Dorsolateral prefrontal cortex (tissue), 120 donors: ENCODE measurements at regions of chr1 and their contacts with region 1.

Region 1: DNA sequence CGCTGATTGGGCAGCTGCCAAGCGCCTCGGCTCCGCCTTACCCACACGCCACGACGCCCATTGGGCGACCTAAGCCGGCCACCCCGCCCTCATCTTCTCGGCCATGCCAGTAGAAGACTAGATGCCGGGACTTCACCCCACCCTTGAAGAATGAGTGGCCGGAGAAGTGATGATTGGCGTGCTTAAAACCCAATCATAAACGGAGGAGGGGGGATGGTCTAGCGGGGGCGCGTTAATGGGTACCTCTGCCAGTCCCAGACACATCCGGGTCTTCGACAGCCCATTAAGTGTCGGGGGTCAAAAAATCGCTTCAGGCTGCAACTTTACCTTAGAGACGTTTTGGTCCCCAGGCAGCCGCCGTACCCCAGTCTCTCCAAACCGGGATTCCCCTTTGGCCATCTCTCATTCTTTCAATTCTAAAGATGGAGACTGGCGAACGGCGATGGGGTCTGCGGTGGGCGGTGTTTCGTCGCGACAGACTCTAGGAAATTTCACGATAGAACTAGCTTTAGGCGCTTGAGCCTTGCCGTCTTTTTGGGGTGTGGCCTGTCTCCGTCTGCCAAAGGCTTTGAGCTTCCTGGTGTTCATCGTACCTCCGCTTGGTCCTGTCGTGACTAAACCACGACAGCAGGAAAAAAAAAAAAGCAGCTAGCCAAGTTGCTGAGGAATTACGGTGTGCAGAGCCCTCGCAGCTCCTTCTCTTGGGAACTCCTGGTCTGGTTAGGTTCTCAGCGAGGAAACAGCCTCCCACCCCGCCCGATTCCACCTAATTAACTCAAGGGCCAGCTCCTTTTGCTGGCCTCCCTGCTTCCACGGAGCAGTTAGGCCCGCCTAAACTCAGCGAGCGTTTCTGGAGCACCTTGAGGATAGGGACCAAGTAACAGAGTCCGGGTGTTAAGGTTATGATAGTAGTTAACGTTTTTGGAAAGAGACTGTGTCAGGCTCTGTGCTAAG is at the start of gene GATAD2B:
- DNase-seq: peak; percentile 98 to 100 (median 99)
- H3K4me3 ChIP-seq: peak within 1 kb of the TSS; percentile 55 to 95 (median 82)
- H3K27ac ChIP-seq: peak within 1 kb of the TSS; percentile 76 to 98 (median 95)
- H3K27me3 ChIP-seq: no peaks in the 10 kb centered on the region
- CTCF ChIP-seq: peak in 19 of 56 donors; percentile 4 to 50 (median 26)
- total RNA-seq, gene GATAD2B: 55.8 to 101 (median 81.7) TPM

Region 2: GRCh38 chr1:153441238-153441933 is 481.9 kb before region 1 on chr1:
- intact Hi-C with region 1: no loop called
- DNase-seq: no peak
- H3K4me3 ChIP-seq: no peak overlapping the region
- H3K27ac ChIP-seq: no peak overlapping the region
- H3K27me3 ChIP-seq: peaks cover 0 to 26% (median 0%) of the 10 kb centered on the region in 45 donors
- CTCF ChIP-seq: no peak

Region 3: DNA sequence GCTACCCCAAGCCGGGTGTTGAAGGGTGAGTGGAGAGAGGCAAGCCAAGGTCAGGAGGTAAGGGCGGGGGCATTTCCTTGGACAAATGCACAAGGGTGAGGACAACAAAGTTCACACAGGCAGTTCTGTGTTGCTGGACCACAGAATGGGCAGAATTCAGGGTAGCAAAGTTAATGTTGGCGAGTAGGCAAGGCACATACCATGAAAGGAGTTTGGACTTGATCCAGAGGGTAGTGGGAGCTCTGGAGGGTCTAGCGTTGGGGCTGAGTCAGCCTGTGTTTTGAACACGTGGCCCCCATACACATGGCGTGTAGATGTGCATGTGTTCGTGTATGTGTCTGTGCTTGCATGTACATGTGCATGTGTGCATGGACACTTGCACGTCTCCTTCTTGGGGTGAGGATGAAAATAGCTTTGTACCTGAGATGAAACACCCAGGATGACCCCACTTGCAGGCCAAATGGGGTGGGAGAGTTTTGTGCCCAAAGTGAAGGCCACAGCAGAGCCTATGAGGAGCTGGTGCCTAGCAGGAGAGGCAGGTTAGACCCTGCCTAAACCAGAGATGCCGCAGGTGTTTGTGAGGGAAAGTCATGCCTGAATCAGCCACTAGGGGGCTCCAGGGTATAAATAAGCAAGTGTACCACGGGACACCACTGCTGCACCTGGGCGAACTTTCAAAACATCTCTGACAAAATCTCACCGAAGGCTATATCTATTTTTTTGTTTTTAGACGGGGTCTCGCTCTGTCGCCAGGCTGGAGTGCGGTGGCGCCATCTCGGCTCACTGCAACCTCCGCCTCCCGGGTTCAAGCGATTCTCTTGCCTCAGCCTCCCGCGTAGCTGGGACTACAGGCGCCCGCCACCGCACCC is 126.2 kb before region 1 on chr1:
- intact Hi-C with region 1: loop called in 1 of 2 experiments (anchors 5 kb)
- DNase-seq: peak in 8 of 10 donors; percentile 53 to 91 (median 72)
- H3K4me3 ChIP-seq: peak overlapping the region in 3 of 59 donors; percentile 7 to 22 (median 15)
- H3K27ac ChIP-seq: no peak overlapping the region
- H3K27me3 ChIP-seq: no peaks in the 10 kb centered on the region
- CTCF ChIP-seq: peak; percentile 68 to 94 (median 90)

Region 4: GRCh38 chr1:153816283-153816889 is 106.9 kb before region 1 on chr1:
- intact Hi-C with region 1: loop called in 1 of 2 experiments (anchors 1 kb)
- DNase-seq: no peak
- H3K4me3 ChIP-seq: no peak overlapping the region
- H3K27ac ChIP-seq: peak overlapping the region in 2 of 59 donors; percentile 14 to 29
- H3K27me3 ChIP-seq: no peaks in the 10 kb centered on the region
- CTCF ChIP-seq: no peak

Region 5: GRCh38 chr1:153866045-153866850 is 57.0 kb before region 1 on chr1:
- intact Hi-C with region 1: no loop called
- DNase-seq: no peak
- H3K4me3 ChIP-seq: no peak overlapping the region
- H3K27ac ChIP-seq: peak overlapping the region in 1 of 59 donors; percentile 3
- H3K27me3 ChIP-seq: no peaks in the 10 kb centered on the region
- CTCF ChIP-seq: no peak

Region 6: DNA sequence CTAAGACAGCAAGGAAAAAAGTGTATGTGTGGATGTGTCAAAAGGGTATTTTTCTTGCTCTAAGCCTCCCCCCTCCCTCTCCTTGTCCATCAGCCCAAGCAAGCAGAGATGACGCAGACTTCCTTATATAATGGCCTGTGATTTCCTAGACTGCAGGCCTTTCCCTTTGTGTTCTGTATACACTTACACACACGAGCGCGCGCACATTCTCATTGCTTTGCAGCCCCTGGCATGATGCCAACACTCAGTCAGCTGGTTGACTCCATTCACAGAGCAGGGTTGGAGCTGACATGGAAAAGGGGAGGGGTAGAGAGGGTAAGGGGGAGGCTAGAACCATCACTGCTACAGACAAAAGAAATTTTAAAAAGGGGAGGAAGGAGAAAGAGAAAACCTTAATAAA is 42.3 kb before region 1 on chr1:
- intact Hi-C with region 1: loop called (anchors 2 to 5 kb)
- DNase-seq: peak; percentile 81 to 97 (median 90)
- H3K4me3 ChIP-seq: peak overlapping the region in 58 of 59 donors; percentile 4 to 60 (median 40)
- H3K27ac ChIP-seq: peak overlapping the region in 55 of 59 donors; percentile 11 to 83 (median 62)
- H3K27me3 ChIP-seq: no peaks in the 10 kb centered on the region
- CTCF ChIP-seq: peak in 11 of 56 donors; percentile 10 to 40 (median 22)

Region 7: DNA sequence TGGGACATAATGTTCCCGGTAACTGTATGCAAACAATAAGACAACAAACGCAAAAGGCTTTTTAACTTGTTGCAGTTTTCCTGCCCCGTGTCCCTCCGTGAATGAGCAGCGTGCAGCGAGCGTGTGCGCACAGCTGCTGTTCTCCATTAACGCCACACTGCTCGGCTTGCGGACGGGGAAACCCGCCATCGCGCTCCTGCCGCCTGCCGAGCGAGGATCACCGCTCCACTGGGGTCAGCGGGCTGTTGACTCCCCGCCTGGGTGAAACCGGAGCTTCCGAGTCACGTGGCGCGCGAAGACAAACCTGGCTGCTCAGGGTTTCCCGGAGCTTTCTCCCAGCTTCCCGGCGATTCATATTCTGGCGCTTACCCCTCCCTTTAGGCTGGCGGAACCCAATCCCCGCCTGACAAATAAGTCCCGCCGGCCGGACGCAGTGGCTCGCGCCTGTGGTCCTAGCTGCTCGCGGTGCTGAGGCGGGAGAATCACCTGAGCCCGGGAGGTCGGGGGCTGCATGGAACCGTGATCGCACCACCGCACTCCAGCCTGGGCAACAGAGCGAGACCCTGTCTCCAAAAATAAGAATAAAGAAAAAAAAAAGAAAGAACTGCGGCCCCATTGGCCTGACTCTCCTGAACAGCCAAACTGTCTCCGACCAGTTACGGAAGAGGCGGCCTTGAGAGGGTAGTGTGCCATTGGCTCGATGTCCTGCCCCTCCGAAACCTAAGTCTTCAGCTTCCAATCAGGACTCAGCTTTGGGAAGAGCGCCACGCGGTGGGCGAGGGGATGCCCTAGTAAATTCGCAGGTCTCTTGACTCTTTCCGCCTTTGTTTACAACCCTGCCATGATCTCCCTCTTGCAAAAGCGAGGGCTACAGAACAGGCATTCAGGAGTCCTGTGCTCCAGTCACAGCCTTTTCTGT is 44.1 kb after region 1 on chr1 and contains the start of gene CREB3L4:
- intact Hi-C with region 1: loop called in 1 of 2 experiments (anchors 5 kb)
- DNase-seq: peak; percentile 82 to 96 (median 93)
- H3K4me3 ChIP-seq: peak within 1 kb of the TSS; percentile 57 to 87 (median 74)
- H3K27ac ChIP-seq: peak within 1 kb of the TSS; percentile 42 to 98 (median 93)
- H3K27me3 ChIP-seq: no peaks in the 10 kb centered on the region
- CTCF ChIP-seq: peak; percentile 30 to 77 (median 66)
- total RNA-seq, gene CREB3L4: 1.5 to 11.6 (median 4.5) TPM